ENCODE measurements at regions of chr14 and their contacts with region 1.

Region 1: GRCh38 chr14:76050797-76051392 is 65.3 kb downstream of the IFT43 start:
- H3K4me3 ChIP-seq: no peak overlapping the region
- H3K27ac ChIP-seq: no peak overlapping the region
- H3K4me1 ChIP-seq: no peaks in the 10 kb centered on the region
- CTCF ChIP-seq: no peak

Region 2: DNA sequence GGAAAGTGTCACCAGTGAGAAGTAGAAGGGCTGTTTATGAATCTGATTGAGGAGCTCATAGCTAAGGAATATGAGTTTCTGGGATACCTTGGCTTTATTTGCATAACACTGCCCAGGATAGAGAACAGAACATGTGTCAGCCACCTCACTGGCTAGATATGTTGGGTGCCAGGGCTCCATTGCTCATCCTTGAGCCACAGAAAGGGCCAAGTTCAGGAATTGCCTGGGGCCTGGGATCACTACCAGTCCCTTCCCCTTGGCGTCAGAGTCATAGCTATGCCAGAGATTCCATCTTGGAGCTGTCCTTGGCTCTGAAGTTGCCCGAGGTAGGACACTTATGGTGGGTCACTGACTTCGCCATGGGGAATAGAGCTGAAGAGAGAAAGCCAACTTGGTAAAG is 16.3 kb before region 1 on chr14:
- CTCF ChIA-PET with region 1: interaction called, 10 read pairs
- POLR2A ChIA-PET with region 1: no interaction called
- H3K4me3 ChIP-seq: no peak overlapping the region
- H3K27ac ChIP-seq: no peak overlapping the region
- H3K4me1 ChIP-seq: no peaks in the 10 kb centered on the region
- CTCF ChIP-seq: no peak

Region 3: DNA sequence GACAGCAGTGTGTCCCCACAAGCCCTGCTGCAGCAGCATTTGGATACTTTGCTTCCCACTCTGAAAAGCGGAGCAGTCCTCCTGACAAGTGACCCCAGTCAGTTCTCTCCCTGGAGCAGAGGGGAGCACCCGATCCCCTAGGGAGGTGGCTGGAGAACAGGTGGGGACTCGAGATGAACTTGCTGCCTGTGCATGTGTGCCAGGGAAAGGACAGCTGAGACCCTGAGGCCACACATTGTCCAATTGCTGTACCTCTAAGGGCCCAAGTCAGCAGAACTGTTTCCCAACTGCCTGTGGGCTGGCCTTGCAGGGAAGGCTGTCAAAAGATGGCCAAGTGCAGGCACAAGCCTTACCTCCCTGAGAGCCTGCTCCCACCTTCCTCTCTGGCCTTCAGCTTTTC is 10.2 kb before region 1 on chr14:
- CTCF ChIA-PET with region 1: interaction called, 10 read pairs
- POLR2A ChIA-PET with region 1: no interaction called
- H3K4me3 ChIP-seq: no peak overlapping the region
- H3K27ac ChIP-seq: no peak overlapping the region
- H3K4me1 ChIP-seq: no peaks in the 10 kb centered on the region
- CTCF ChIP-seq: no peak

Region 4: DNA sequence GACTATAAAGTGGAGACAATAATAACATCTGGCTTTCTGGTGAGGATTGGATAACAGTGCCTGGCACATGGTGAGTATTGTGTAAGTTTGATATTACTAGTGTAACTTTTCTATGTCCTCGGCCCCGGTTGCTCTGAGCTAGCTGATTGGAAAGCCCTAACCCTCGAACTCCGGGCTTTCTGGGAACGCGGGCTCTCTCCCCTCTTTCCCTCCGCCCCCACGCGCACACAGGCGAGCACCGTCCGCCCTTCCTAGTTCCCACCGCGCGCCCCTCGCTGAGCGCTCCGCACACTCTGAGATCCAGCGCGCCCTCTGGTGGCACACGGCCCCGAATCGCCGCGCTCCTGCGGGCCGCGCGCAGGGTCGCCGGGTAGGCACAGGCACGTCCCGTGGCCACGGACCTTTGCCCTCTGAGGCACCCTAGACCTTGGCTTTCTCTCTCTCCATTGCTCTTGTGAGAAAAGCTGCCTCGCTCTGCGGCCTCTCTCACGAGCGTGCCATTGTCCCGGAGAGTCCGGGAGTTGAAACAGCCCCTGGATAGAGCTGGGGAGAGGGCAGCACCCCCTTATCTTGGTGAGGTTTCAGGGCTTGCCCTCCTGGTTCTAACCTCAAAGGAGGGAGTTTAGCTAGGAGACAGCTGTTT is 301.9 kb after region 1 on chr14:
- CTCF ChIA-PET with region 1: interaction called, 34 read pairs
- POLR2A ChIA-PET with region 1: no interaction called
- H3K4me3 ChIP-seq: no peak overlapping the region
- H3K27ac ChIP-seq: no peak overlapping the region
- H3K4me1 ChIP-seq: no peaks in the 10 kb centered on the region
- CTCF ChIP-seq: peak; percentile 91

Region 5: DNA sequence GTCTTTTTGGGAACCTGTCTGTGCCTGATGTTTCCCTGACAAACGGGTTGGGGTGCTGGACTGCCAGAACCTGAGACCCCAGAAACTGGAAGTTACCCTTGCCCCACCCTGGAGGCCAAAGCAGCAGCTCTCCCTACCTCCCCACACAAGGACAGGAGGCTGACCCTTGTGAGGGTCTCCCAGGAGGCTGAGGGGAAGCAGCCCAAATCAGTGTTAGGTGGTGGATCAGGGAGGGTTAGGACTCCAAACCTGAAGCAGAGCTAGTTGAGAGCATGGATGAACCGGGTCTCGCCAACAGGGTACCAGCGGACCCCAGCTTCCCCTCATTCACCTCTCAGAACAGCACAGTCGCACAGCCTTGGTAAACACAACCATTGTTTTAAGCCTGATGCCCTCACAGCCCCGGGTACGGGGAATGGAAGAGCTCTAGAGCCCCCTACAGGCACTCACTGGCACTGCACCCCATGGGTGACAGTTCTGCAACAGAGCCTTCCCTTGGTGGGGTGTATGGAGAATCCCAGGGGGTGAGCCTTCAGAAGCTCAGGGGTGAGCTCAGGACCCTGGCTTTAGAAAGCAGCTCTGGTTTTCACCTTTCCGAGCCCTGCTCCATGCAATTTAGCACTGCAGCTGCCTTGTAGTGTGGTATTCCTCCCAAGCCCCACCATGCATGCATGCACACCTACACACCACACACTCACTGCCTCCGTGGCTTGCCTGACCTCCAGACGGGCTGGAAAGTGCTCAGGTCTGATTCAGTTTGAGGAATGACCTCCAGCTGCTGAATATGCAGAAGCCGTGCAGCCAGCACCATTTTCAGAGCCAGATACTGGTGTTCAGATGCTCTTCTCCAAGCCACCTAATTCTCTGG is 336.3 kb after region 1 on chr14:
- CTCF ChIA-PET with region 1: interaction called, 103 read pairs
- POLR2A ChIA-PET with region 1: no interaction called
- H3K4me3 ChIP-seq: no peak overlapping the region
- H3K27ac ChIP-seq: no peak overlapping the region
- H3K4me1 ChIP-seq: no peaks in the 10 kb centered on the region
- CTCF ChIP-seq: peak; percentile 69

Region 6: GRCh38 chr14:76595266-76595665 is 544.4 kb after region 1 on chr14:
- CTCF ChIA-PET with region 1: no interaction called
- POLR2A ChIA-PET with region 1: no interaction called
- H3K4me3 ChIP-seq: no peak overlapping the region
- H3K27ac ChIP-seq: no peak overlapping the region
- H3K4me1 ChIP-seq: no peaks in the 10 kb centered on the region
- CTCF ChIP-seq: no peak

Region 7: DNA sequence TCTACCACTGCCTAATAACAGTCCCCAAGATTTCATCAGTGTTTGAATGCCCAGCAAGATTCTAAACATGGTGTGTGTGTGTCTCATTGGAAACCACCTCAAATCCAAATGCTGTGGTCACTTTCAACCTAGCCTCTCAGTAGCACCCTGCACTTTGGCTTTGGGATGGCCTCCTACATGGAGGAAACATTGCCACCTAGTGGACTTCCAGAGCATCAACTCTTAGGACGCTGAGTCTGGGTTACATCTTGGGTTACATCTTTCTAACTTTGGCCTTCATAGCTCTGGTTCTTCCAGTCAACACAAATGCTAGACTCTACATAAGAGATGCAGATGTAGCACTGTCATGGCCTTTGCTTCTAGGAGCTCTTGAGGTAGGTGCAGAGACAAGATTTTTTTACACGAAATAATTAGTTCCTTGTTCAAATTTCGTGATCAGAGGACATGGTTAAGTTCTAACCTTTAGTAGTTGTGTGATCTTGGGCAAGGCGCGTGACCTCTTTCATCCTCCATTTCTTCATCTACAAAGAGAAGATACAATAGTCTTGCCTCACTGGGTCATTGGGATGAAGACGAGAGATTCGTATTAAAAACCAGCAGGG is 596.9 kb after region 1 on chr14:
- CTCF ChIA-PET with region 1: interaction called, 80 read pairs
- POLR2A ChIA-PET with region 1: no interaction called
- H3K4me3 ChIP-seq: no peak overlapping the region
- H3K27ac ChIP-seq: no peak overlapping the region
- H3K4me1 ChIP-seq: no peaks in the 10 kb centered on the region
- CTCF ChIP-seq: no peak

Measured in HEK293 (cell line).